GM12878 (cell line): ENCODE measurements at regions of chr10 and their contacts with region 1.

Region 1: GRCh38 chr10:119859420-119860258 is 13.0 kb downstream of the MCMBP start:
- DNase-seq: no peak
- ATAC-seq: peak; percentile 60
- H3K4me3 ChIP-seq: no peak overlapping the region
- H3K27ac ChIP-seq: no peak overlapping the region
- H3K4me1 ChIP-seq: peaks cover 8% of the 10 kb centered on the region
- H3K27me3 ChIP-seq: no peaks in the 10 kb centered on the region
- CTCF ChIP-seq: peak; percentile 36 to 70 (median 57); a peak in 5 of 6 replicates
- EP300 ChIP-seq: no peak
- POLR2A ChIP-seq: no peak
- RAD21 ChIP-seq: peak; percentile 70

Region 2: GRCh38 chr10:119663866-119664616 is 195.6 kb before region 1 on chr10:
- CTCF ChIA-PET with region 1: interaction called, 14 read pairs
- POLR2A ChIA-PET with region 1: no interaction called
- RAD21 ChIA-PET with region 1: no interaction called
- SMC1A ChIA-PET with region 1: interaction called, 3 read pairs
- in situ Hi-C with region 1: no loop called
- intact Hi-C with region 1: no loop called
- DNase-seq: no peak
- ATAC-seq: peak; percentile 58
- H3K4me3 ChIP-seq: no peak overlapping the region
- H3K27ac ChIP-seq: no peak overlapping the region
- H3K4me1 ChIP-seq: peaks cover 9% of the 10 kb centered on the region; the same call in 1 of the 2 replicates
- H3K27me3 ChIP-seq: no peaks in the 10 kb centered on the region
- CTCF ChIP-seq: no peak
- EP300 ChIP-seq: no peak
- POLR2A ChIP-seq: no peak
- RAD21 ChIP-seq: no peak

Region 3: DNA sequence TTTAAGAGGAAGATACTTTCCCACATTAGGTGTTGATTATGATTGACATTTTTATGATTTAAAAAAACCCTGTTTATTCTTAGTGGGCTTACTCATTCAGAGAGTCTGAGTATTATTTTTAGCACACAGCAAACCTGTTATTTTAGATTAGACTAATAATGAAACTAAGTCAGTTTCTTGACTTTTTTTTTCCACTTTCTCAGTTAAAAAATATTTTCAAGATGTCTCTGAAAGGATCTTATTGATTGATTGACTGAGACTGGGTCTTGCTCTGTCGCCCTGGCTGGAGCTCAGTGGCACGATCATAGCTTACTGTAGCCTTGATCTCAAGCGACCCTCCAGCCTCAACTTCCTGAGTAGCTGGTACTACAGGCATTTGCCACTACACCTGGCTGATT is 154.2 kb before region 1 on chr10:
- CTCF ChIA-PET with region 1: interaction called, 11 read pairs
- POLR2A ChIA-PET with region 1: no interaction called
- RAD21 ChIA-PET with region 1: interaction called, 11 read pairs
- SMC1A ChIA-PET with region 1: interaction called, 6 read pairs
- in situ Hi-C with region 1: no loop called
- intact Hi-C with region 1: no loop called
- DNase-seq: peak; percentile 76
- ATAC-seq: peak; percentile 40
- H3K4me3 ChIP-seq: no peak overlapping the region; the same call in 1 of the 2 replicates
- H3K27ac ChIP-seq: peak overlapping the region; percentile 92
- H3K4me1 ChIP-seq: peaks cover 72% of the 10 kb centered on the region
- H3K27me3 ChIP-seq: no peaks in the 10 kb centered on the region
- CTCF ChIP-seq: no peak
- EP300 ChIP-seq: peak; percentile 94 to 100
- POLR2A ChIP-seq: no peak
- RAD21 ChIP-seq: no peak

Region 4: DNA sequence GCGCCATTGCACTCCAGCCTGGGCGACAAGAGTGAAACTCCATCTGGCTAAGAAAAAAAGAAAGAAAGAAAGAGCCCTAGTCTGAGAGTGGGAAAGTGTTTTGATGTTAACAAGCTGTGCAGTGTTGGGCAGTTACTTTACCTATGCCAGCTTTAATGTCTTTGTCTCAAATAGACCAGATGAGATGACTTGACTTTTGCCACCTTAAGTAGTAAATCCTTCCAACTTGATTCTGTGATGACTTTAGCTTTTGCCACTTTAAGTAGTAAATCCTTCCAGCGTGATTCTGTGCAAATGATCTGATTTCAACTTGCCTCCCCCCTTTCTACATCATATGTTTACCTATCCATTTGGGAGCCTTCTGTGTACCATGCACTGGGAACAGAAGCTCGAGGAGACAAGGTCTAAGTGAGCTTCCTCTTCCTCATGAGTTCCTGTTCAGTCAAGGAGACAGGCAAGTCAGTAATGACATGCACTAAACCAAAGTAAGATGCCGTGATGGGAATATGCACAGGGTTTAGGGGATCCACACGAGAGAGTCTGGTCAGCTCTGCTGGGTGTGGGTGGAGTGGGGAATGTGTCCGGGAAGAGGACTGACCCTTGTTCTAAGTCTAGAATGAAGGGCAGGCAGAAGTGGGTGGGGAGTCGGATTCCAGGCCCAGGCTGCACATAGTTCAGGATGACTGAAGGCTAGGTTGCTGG is 116.5 kb before region 1 on chr10:
- CTCF ChIA-PET with region 1: interaction called, 243 read pairs
- POLR2A ChIA-PET with region 1: interaction called, 8 read pairs
- RAD21 ChIA-PET with region 1: interaction called, 136 read pairs
- SMC1A ChIA-PET with region 1: interaction called, 164 read pairs
- in situ Hi-C with region 1: loop called (anchors 5 kb)
- intact Hi-C with region 1: no loop called
- DNase-seq: no peak
- ATAC-seq: no peak
- H3K4me3 ChIP-seq: no peak overlapping the region
- H3K27ac ChIP-seq: no peak overlapping the region
- H3K4me1 ChIP-seq: no peaks in the 10 kb centered on the region
- H3K27me3 ChIP-seq: no peaks in the 10 kb centered on the region
- CTCF ChIP-seq: no peak
- EP300 ChIP-seq: no peak
- POLR2A ChIP-seq: no peak
- RAD21 ChIP-seq: no peak

Region 5: GRCh38 chr10:119784340-119785070 is 75.1 kb before region 1 on chr10:
- CTCF ChIA-PET with region 1: interaction called, 11 read pairs
- POLR2A ChIA-PET with region 1: no interaction called
- RAD21 ChIA-PET with region 1: no interaction called
- SMC1A ChIA-PET with region 1: interaction called, 8 read pairs
- in situ Hi-C with region 1: no loop called
- intact Hi-C with region 1: no loop called
- DNase-seq: peak; percentile 54
- ATAC-seq: peak; percentile 91
- H3K4me3 ChIP-seq: no peak overlapping the region
- H3K27ac ChIP-seq: peak overlapping the region; percentile 7; the same call in 1 of the 2 replicates
- H3K4me1 ChIP-seq: peaks cover 14% of the 10 kb centered on the region
- H3K27me3 ChIP-seq: no peaks in the 10 kb centered on the region
- CTCF ChIP-seq: no peak
- EP300 ChIP-seq: peak; percentile 71 to 84; a peak in 3 of 4 replicates
- POLR2A ChIP-seq: no peak
- RAD21 ChIP-seq: no peak

Region 6: DNA sequence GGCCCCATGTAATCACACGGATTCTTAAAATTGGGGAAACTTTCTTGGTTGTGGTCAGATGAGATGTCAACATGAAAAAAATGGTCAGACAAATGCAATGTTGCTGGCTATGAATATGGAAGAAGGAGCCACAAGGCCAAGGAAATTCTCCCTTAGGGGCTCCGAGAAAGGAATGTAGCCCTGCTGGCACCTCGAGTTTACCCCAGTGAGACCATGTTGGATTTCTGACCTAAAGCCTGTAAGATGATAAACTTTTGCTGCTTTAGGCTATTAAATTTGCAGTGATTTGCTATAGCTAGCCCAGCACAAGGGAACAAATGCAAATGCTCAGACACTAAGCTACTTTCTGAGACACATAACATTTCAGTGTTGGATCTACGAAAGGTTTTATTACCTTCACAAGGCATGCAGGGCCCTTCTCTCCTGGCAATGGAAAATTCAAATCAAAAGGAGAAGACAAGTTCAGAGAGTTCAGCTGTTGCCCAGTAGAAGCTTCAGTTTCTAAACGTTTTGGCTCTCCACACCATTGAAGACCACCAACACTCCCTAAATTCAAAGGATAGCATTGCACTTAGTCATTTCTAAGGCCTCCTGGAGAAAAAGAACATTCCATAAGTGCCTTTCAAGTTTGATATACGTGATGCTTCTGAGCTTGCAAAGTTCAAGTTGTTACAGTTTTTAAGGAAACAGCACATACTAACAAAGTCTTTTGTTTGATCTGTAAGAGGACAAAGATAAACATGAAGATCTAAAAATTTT is 10.4 kb before region 1 on chr10:
- CTCF ChIA-PET with region 1: interaction called, 8 read pairs
- POLR2A ChIA-PET with region 1: no interaction called
- RAD21 ChIA-PET with region 1: no interaction called
- SMC1A ChIA-PET with region 1: interaction called, 12 read pairs
- in situ Hi-C with region 1: no loop called
- intact Hi-C with region 1: no loop called
- DNase-seq: no peak
- ATAC-seq: no peak
- H3K4me3 ChIP-seq: no peak overlapping the region
- H3K27ac ChIP-seq: no peak overlapping the region
- H3K4me1 ChIP-seq: no peaks in the 10 kb centered on the region
- H3K27me3 ChIP-seq: no peaks in the 10 kb centered on the region
- CTCF ChIP-seq: no peak
- EP300 ChIP-seq: no peak
- POLR2A ChIP-seq: no peak
- RAD21 ChIP-seq: no peak

Region 7: GRCh38 chr10:119919826-119920225 is 60.2 kb after region 1 on chr10:
- CTCF ChIA-PET with region 1: interaction called, 15 read pairs
- POLR2A ChIA-PET with region 1: no interaction called
- RAD21 ChIA-PET with region 1: interaction called, 3 read pairs
- SMC1A ChIA-PET with region 1: interaction called, 4 read pairs
- in situ Hi-C with region 1: no loop called
- intact Hi-C with region 1: no loop called
- DNase-seq: peak; percentile 13
- ATAC-seq: peak; percentile 86
- H3K4me3 ChIP-seq: 0 out of 2 replicates have a peak overlapping the region, but pooled peaks have one; percentile 10
- H3K27ac ChIP-seq: peak overlapping the region; percentile 75
- H3K4me1 ChIP-seq: peaks cover 8% of the 10 kb centered on the region
- H3K27me3 ChIP-seq: no peaks in the 10 kb centered on the region
- CTCF ChIP-seq: no peak
- EP300 ChIP-seq: no peak
- POLR2A ChIP-seq: no peak
- RAD21 ChIP-seq: no peak

Region 8: DNA sequence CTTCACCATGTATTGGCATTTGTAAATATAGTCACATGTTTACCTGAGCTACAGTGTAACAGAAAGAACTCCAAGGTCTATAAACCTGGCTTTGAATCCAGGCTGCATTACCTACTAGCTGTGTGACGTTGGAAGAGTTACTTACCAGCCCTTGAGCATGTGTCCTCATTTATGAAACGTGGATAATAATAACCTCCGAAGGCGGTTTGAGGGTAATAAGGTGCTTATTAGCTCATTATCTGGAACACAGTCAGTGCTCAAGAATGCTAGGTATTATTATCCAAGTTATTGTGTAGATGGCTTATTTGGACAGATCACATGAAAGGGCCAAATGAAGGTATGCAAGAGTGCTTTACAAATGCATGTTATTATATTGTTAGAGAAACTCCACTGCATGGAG is 97.8 kb after region 1 on chr10:
- CTCF ChIA-PET with region 1: no interaction called
- POLR2A ChIA-PET with region 1: no interaction called
- RAD21 ChIA-PET with region 1: no interaction called
- SMC1A ChIA-PET with region 1: no interaction called
- in situ Hi-C with region 1: no loop called
- intact Hi-C with region 1: no loop called
- DNase-seq: no peak
- ATAC-seq: no peak
- H3K4me3 ChIP-seq: no peak overlapping the region
- H3K27ac ChIP-seq: no peak overlapping the region
- H3K4me1 ChIP-seq: no peaks in the 10 kb centered on the region
- H3K27me3 ChIP-seq: no peaks in the 10 kb centered on the region
- CTCF ChIP-seq: no peak
- EP300 ChIP-seq: no peak
- POLR2A ChIP-seq: no peak
- RAD21 ChIP-seq: no peak

Region 9: GRCh38 chr10:120011359-120012130 is 151.9 kb after region 1 on chr10:
- CTCF ChIA-PET with region 1: no interaction called
- POLR2A ChIA-PET with region 1: no interaction called
- RAD21 ChIA-PET with region 1: no interaction called
- SMC1A ChIA-PET with region 1: no interaction called
- in situ Hi-C with region 1: no loop called
- intact Hi-C with region 1: no loop called
- DNase-seq: no peak
- ATAC-seq: no peak
- H3K4me3 ChIP-seq: no peak overlapping the region
- H3K27ac ChIP-seq: no peak overlapping the region
- H3K4me1 ChIP-seq: no peaks in the 10 kb centered on the region
- H3K27me3 ChIP-seq: no peaks in the 10 kb centered on the region; a peak in 1 of 4 replicates
- CTCF ChIP-seq: no peak
- EP300 ChIP-seq: no peak
- POLR2A ChIP-seq: no peak
- RAD21 ChIP-seq: no peak